Activated CD4-positive, alpha-beta T cell treated with anti-CD3 and anti-CD28 coated beads, Interleukin-2, amount 10 ng/mL, durations not matched to agents 24 days and 14 days (primary cell): ENCODE measurements at regions of chr4 and their contacts with region 1.

Region 1: GRCh38 chr4:876780-877179 is 50.9 kb upstream of the CPLX1 start:
- DNase-seq: no peak
- H3K4me3 Mint-ChIP-seq: no peak overlapping the region
- H3K27ac Mint-ChIP-seq: peak overlapping the region; percentile 38
- H3K4me1 Mint-ChIP-seq: peaks cover 29% of the 10 kb centered on the region
- H3K27me3 Mint-ChIP-seq: no peaks in the 10 kb centered on the region

Region 2: GRCh38 chr4:742742-743311 is 134.0 kb before region 1 on chr4:
- intact Hi-C with region 1: loop called (anchors 5 kb)
- DNase-seq: peak; percentile 93
- H3K4me3 Mint-ChIP-seq: no peak overlapping the region
- H3K27ac Mint-ChIP-seq: peak overlapping the region; percentile 53
- H3K4me1 Mint-ChIP-seq: peaks cover 3% of the 10 kb centered on the region
- H3K27me3 Mint-ChIP-seq: no peaks in the 10 kb centered on the region

Region 3: GRCh38 chr4:825238-825835 is 51.4 kb before region 1 on chr4:
- intact Hi-C with region 1: loop called (anchors 2 kb)
- DNase-seq: peak; percentile 79
- H3K4me3 Mint-ChIP-seq: peak overlapping the region; percentile 39
- H3K27ac Mint-ChIP-seq: peak overlapping the region; percentile 56
- H3K4me1 Mint-ChIP-seq: peaks cover 2% of the 10 kb centered on the region
- H3K27me3 Mint-ChIP-seq: peaks cover 39% of the 10 kb centered on the region

Region 4: DNA sequence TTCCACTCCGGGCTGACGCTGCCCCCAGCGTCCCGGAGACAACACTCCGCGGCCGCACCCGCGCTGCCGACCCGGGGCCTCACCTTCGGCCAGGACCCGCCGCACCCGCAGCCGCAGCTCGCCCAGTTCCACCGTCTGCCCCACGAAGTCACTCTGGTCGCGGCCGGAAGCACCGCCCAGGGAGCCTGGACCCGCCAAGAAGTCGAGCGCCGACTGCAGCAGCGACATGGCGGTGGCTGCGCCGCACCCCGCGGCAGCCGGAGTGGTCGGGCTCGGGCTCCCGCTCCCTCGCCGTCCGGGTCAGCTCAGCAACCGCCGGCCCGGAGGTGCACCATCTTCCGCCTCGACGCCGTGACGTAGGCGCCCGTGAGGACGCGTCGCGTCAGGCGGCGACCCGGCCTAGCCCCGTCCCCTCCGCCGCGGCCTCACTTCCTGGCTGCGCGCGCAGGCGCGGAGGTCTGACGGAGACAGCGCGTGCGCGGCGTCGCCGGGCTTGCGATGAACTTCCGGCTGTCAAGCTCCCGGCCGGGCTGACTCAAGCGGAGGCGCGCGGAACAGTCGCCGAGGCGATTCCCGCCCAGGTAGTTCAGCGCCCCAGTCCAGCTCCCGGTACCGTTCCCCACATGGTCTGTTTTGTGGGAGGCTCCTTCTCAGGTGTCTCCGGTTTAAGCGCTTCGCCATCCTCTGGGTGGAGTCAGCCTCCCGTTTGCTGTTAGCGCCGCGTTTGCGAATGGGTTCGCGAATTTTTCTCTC is 55.4 kb after region 1 on chr4 and contains the starts of genes GAK and TMEM175:
- intact Hi-C with region 1: loop called (anchors 1 kb)
- DNase-seq: peak; percentile 100
- H3K4me3 Mint-ChIP-seq: peak within 1 kb of the TSS; percentile 99
- H3K27ac Mint-ChIP-seq: peak within 1 kb of the TSS; percentile 95
- H3K4me1 Mint-ChIP-seq: peaks cover 40% of the 10 kb centered on the region
- H3K27me3 Mint-ChIP-seq: no peaks in the 10 kb centered on the region
- total RNA-seq, gene GAK: 131 and 147 TPM in 2 replicates
- total RNA-seq, gene TMEM175: 12.7 and 13.9 TPM in 2 replicates

Region 5: GRCh38 chr4:986879-987623 is 110.3 kb after region 1 on chr4 and contains the start of gene IDUA:
- intact Hi-C with region 1: loop called (anchors 1 kb)
- DNase-seq: peak; percentile 96
- H3K4me3 Mint-ChIP-seq: peak within 1 kb of the TSS; percentile 86
- H3K27ac Mint-ChIP-seq: peak within 1 kb of the TSS; percentile 87
- H3K4me1 Mint-ChIP-seq: peaks cover 15% of the 10 kb centered on the region
- H3K27me3 Mint-ChIP-seq: no peaks in the 10 kb centered on the region
- total RNA-seq, gene IDUA: 30.4 and 31.2 TPM in 2 replicates